ENCODE measurements at regions of chr4 and their contacts with region 1.

Region 1: GRCh38 chr4:159764343-159764952 is 661.6 kb downstream of the RAPGEF2 start:
- DNase-seq: peak in 1 of 2 experiments; percentile 56
- H3K4me3 ChIP-seq: no peak overlapping the region
- H3K4me3 Mint-ChIP-seq: no peak overlapping the region
- H3K27ac Mint-ChIP-seq: no peak overlapping the region
- H3K4me1 ChIP-seq: no peaks in the 10 kb centered on the region
- H3K4me1 Mint-ChIP-seq: no peaks in the 10 kb centered on the region
- H3K27me3 ChIP-seq: no peaks in the 10 kb centered on the region
- H3K27me3 Mint-ChIP-seq: no peaks in the 10 kb centered on the region
- CTCF ChIP-seq: peak; percentile 24 to 50

Region 2: GRCh38 chr4:159655547-159655946 is 108.9 kb before region 1 on chr4:
- CTCF ChIA-PET with region 1: no interaction called
- POLR2A ChIA-PET with region 1: no interaction called
- intact Hi-C with region 1: no loop called
- DNase-seq: no peak
- H3K4me3 ChIP-seq: no peak overlapping the region
- H3K4me3 Mint-ChIP-seq: no peak overlapping the region
- H3K27ac Mint-ChIP-seq: no peak overlapping the region
- H3K4me1 ChIP-seq: no peaks in the 10 kb centered on the region
- H3K4me1 Mint-ChIP-seq: no peaks in the 10 kb centered on the region
- H3K27me3 ChIP-seq: no peaks in the 10 kb centered on the region
- H3K27me3 Mint-ChIP-seq: no peaks in the 10 kb centered on the region
- CTCF ChIP-seq: no peak

Region 3: DNA sequence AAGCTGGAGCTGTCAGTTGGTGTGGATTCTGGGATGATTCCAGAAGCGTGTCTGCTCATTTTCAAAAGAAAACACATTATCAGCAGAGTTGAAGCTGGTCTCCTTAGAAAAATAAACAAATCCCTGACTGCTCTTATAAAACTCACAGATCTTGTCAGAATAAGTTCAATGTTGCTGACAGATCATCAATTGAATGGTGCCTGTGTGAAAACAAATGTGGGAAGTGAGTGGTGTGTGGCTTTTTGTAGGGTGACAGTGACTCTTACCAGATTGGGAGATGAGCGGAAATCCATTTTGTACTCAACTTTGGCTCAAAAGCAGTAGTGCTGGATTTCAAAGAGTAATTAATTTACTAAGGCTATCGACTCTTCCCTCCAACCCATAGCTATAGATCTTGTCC is 146.3 kb after region 1 on chr4:
- CTCF ChIA-PET with region 1: no interaction called
- POLR2A ChIA-PET with region 1: no interaction called
- intact Hi-C with region 1: loop called (anchors 10 kb)
- DNase-seq: no peak
- H3K4me3 ChIP-seq: no peak overlapping the region
- H3K4me3 Mint-ChIP-seq: no peak overlapping the region
- H3K27ac Mint-ChIP-seq: no peak overlapping the region
- H3K4me1 ChIP-seq: no peaks in the 10 kb centered on the region
- H3K4me1 Mint-ChIP-seq: no peaks in the 10 kb centered on the region
- H3K27me3 ChIP-seq: no peaks in the 10 kb centered on the region
- H3K27me3 Mint-ChIP-seq: peaks cover under 1% of the 10 kb centered on the region
- CTCF ChIP-seq: no peak

Region 4: GRCh38 chr4:160175064-160175645 is 410.7 kb after region 1 on chr4:
- CTCF ChIA-PET with region 1: no interaction called
- POLR2A ChIA-PET with region 1: no interaction called
- intact Hi-C with region 1: loop called (anchors 10 kb)
- DNase-seq: peak in 1 of 2 experiments; percentile 21
- H3K4me3 ChIP-seq: no peak overlapping the region
- H3K4me3 Mint-ChIP-seq: no peak overlapping the region
- H3K27ac Mint-ChIP-seq: no peak overlapping the region
- H3K4me1 ChIP-seq: no peaks in the 10 kb centered on the region
- H3K4me1 Mint-ChIP-seq: no peaks in the 10 kb centered on the region
- H3K27me3 ChIP-seq: no peaks in the 10 kb centered on the region
- H3K27me3 Mint-ChIP-seq: no peaks in the 10 kb centered on the region
- CTCF ChIP-seq: peak; percentile 11 to 31

Measured in Caco-2 (cell line).